AG04450 (cell line): ENCODE measurements at regions of chr12 and their contacts with region 1.

Region 1: GRCh38 chr12:14239350-14239934 is 126.0 kb upstream of the ATF7IP start:
- DNase-seq: no peak
- H3K4me3 ChIP-seq: no peak overlapping the region
- H3K27ac ChIP-seq: no peak overlapping the region
- H3K27me3 ChIP-seq: no peaks in the 10 kb centered on the region
- CTCF ChIP-seq: no peak

Region 2: DNA sequence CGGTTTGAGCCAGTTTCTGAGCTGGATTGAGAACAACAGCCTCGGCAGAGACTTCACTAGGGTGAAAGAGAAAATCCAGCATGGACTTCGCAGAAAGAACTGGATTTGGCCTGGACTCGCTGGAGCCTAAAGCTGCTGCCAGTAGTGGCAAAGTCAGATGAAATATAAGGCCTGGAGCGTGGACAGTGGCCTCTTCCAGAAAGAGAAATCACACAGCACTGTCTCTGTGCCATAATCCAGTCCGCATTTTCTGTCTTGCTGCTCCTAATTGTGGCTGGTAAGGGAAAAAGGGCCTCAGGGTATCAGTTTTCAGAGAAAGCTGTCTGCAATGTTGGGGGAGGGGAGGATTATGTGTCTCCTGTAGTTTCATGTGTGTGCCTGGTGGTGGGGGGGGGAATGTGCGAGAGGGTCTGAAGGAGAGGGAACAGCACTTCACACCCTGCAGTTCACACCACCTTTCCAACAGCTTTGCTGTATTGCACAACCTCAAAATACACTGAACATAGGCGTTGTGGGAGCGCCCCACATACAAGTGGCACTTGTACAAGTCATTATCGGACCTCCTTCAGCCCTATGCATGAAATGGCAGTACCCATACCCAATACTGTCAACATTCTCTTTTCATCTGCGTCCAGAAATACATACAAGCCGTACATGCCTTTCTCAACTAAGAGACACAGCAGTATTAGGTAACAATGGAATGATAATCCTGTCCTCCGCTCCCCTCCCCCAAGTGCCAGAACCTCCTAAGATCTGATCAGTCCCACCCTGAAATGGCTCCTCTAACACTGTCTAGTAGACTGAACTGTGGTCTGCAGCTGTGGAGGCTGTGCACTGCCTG is 18.5 kb after region 1 on chr12:
- CTCF ChIA-PET with region 1: interaction called, 16 read pairs
- POLR2A ChIA-PET with region 1: no interaction called
- DNase-seq: peak; percentile 99
- H3K4me3 ChIP-seq: 0 out of 2 replicates have a peak overlapping the region, but pooled peaks have one; percentile 32
- H3K27ac ChIP-seq: peak overlapping the region; percentile 74
- H3K27me3 ChIP-seq: no peaks in the 10 kb centered on the region
- CTCF ChIP-seq: no peak

Region 3: DNA sequence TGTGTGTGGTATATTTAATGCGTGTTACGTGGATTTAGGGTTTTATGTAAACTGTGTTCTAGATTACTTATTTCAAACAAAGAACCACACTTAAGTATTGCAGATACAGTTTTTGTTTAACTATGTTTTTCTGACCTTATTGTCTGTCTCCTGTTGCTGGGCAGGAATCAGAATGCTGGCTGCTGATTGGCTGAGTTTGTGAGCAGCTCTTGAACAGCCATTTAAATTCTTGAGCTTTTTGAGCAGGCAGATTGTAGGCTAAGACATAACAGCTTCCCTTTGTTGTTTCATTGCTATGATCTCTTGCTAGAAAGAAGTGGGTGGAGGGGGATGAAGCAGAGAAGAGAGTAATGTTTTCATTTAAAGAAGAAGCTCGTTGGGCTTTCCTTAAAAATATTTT is 178.3 kb after region 1 on chr12:
- CTCF ChIA-PET with region 1: interaction called, 40 read pairs
- POLR2A ChIA-PET with region 1: no interaction called
- DNase-seq: peak; percentile 76
- H3K4me3 ChIP-seq: no peak overlapping the region
- H3K27ac ChIP-seq: no peak overlapping the region
- H3K27me3 ChIP-seq: no peaks in the 10 kb centered on the region
- CTCF ChIP-seq: no peak

Region 4: GRCh38 chr12:14454098-14454907 is 214.9 kb after region 1 on chr12:
- CTCF ChIA-PET with region 1: interaction called, 19 read pairs
- POLR2A ChIA-PET with region 1: no interaction called
- DNase-seq: no peak
- H3K4me3 ChIP-seq: no peak overlapping the region
- H3K27ac ChIP-seq: no peak overlapping the region
- H3K27me3 ChIP-seq: no peaks in the 10 kb centered on the region
- CTCF ChIP-seq: peak; percentile 63

Region 5: DNA sequence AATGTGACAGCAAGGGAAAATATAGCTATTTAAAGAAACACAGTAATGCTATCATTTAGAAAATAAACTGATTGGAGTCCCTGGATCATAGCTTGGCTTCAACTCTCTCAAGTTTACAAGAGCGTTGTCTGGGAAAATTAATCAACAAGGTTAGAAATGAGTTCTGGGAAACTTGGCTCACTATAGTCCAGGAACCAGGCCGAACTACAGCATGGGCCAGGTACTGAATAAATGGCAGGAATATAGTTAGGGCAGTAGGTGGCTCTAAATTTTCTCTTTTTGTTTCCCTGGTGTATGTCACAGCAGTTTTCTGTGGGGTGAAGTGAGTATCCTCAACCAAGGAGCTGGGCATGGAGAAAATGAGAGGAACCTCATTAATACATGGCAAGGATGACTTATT is 255.9 kb after region 1 on chr12:
- CTCF ChIA-PET with region 1: interaction called, 10 read pairs
- POLR2A ChIA-PET with region 1: no interaction called
- DNase-seq: no peak
- H3K4me3 ChIP-seq: no peak overlapping the region
- H3K27ac ChIP-seq: no peak overlapping the region
- H3K27me3 ChIP-seq: no peaks in the 10 kb centered on the region
- CTCF ChIP-seq: no peak

Region 6: DNA sequence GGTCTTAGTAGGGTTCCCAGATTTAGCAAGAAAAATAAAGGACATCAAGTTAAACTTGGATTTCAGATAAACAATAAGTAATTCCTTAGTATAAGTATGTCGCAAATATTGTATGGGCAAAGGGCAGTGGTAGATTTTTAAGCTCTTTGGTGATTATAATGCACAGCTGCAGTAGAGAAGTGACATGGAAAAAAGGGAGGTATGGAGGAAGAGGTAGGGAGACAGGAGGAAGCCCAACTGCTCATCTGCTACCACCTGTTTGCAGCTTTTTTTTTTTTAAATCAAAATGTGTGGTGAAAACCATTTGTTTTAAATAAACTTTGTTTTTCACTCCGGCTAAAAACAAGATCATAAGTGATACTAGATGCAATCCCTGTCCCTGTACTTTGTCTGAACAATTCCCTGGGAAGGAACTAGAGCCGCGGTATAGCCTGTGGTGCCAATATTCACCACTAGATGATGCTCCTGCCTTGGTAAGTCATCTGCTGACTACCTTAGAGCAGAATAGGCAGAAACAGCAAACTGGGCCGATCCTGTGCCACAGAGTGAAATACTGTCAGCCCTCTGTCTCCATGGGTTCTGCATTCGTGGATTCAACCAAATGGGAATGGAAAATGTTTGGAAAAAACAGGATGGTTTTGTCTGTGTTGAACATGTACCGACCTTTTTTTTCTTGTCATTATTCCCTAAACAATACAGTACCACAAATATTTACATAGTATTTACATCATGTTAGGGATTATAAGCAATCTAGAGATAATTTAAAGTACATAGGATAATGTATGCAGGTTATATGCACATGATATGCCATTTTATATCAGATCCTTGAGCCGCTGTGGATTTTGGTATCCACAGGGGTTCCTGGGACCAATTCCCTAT is 390.6 kb after region 1 on chr12:
- CTCF ChIA-PET with region 1: interaction called, 17 read pairs
- POLR2A ChIA-PET with region 1: no interaction called
- DNase-seq: peak; percentile 21
- H3K4me3 ChIP-seq: no peak overlapping the region
- H3K27ac ChIP-seq: no peak overlapping the region
- H3K27me3 ChIP-seq: no peaks in the 10 kb centered on the region
- CTCF ChIP-seq: peak; percentile 100

Region 7: DNA sequence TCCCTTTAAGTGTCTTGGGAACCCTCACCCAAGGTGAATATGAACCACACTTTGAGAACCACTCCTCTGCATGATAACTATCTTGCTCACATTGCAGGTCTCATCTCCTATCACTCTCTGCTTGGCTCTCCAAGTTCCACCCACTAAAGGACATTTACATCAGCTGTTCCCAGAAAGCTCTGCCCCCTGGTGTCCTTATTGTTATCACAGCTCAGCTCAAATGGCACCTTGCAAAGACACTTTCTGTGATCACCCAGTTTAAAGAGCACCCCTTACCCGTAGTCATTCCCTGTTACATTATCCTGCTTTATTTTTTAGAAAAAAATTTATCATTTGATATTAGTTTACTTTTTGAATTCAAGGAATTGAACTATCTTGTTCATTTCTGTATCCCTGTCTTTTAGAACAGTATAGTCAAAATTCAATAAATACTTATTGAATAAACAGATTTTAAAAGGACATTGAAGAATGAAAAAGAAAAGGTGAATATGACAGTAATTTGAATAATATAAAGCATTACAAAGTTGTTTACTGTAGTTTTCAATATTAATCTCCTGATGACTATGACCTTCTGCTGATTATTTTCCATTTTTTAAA is 477.5 kb after region 1 on chr12:
- CTCF ChIA-PET with region 1: interaction called, 43 read pairs
- POLR2A ChIA-PET with region 1: no interaction called
- DNase-seq: no peak
- H3K4me3 ChIP-seq: no peak overlapping the region
- H3K27ac ChIP-seq: no peak overlapping the region
- H3K27me3 ChIP-seq: no peaks in the 10 kb centered on the region
- CTCF ChIP-seq: peak; percentile 63